ENCODE measurements at regions of chr15 and their contacts with region 1.

Region 1: GRCh38 chr15:68304589-68305337 is 27.2 kb downstream of the FEM1B start:
- DNase-seq: no peak
- ATAC-seq: peak; percentile 10 to 11; a peak in 3 of 6 replicates
- H3K4me3 ChIP-seq: no peak overlapping the region
- H3K27ac ChIP-seq: peak overlapping the region in 1 of 2 experiments; percentile 58; a peak in 2 of 6 replicates
- H3K4me1 ChIP-seq: peaks cover 47% of the 10 kb centered on the region
- CTCF ChIP-seq: no peak
- EP300 ChIP-seq: no peak
- POLR2A ChIP-seq: no peak
- RAD21 ChIP-seq: no peak

Region 2: GRCh38 chr15:67980773-67981685 is 323.7 kb before region 1 on chr15:
- CTCF ChIA-PET with region 1: no interaction called
- POLR2A ChIA-PET with region 1: no interaction called
- DNase-seq: no peak
- ATAC-seq: no peak
- H3K4me3 ChIP-seq: no peak overlapping the region
- H3K27ac ChIP-seq: no peak overlapping the region
- H3K4me1 ChIP-seq: no peaks in the 10 kb centered on the region
- CTCF ChIP-seq: no peak
- EP300 ChIP-seq: no peak
- POLR2A ChIP-seq: no peak
- RAD21 ChIP-seq: no peak

Region 3: GRCh38 chr15:68258692-68259091 is 46.1 kb before region 1 on chr15:
- CTCF ChIA-PET with region 1: interaction called, 189 read pairs
- POLR2A ChIA-PET with region 1: no interaction called
- DNase-seq: no peak
- ATAC-seq: peak in 1 of 2 experiments; percentile 7; a peak in 1 of 6 replicates
- H3K4me3 ChIP-seq: no peak overlapping the region
- H3K27ac ChIP-seq: no peak overlapping the region
- H3K4me1 ChIP-seq: peaks cover 7% of the 10 kb centered on the region; the same call in 2 of the 3 replicates
- CTCF ChIP-seq: no peak
- EP300 ChIP-seq: no peak
- POLR2A ChIP-seq: no peak
- RAD21 ChIP-seq: no peak

Region 4: DNA sequence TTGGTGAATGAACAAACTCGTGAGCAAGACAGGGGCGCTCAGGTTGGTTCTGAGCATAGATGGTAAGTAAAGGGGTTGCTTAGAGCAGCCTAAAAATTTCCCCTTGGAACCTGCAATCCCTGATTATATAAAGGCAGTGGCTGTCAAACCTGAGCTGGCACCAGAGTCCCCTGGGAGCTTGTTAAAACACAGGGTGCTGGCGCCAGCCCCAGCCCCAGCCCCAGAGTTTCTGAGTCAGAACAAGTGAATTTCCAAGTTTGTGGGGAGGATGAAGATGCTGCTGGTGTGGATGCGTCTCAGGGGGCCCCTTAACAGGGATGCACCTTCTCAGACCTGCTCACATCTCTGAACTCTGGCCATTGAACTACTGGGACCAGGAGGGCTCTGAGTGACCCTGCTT is 21.0 kb after region 1 on chr15:
- CTCF ChIA-PET with region 1: interaction called, 97 read pairs
- POLR2A ChIA-PET with region 1: no interaction called
- DNase-seq: no peak
- ATAC-seq: 0 out of 6 replicates have a peak, but pooled peaks of 1 of the 2 experiments have one; percentile 14
- H3K4me3 ChIP-seq: no peak overlapping the region
- H3K27ac ChIP-seq: no peak overlapping the region
- H3K4me1 ChIP-seq: no peaks in the 10 kb centered on the region
- CTCF ChIP-seq: no peak
- EP300 ChIP-seq: no peak
- POLR2A ChIP-seq: no peak
- RAD21 ChIP-seq: no peak

Region 5: GRCh38 chr15:68352401-68353062 is 47.8 kb after region 1 on chr15:
- CTCF ChIA-PET with region 1: interaction called, 58 read pairs
- POLR2A ChIA-PET with region 1: no interaction called
- DNase-seq: peak; percentile 53 to 89
- ATAC-seq: peak; percentile 83 to 86
- H3K4me3 ChIP-seq: no peak overlapping the region
- H3K27ac ChIP-seq: peak overlapping the region; percentile 75 to 84
- H3K4me1 ChIP-seq: peaks cover 42% of the 10 kb centered on the region
- CTCF ChIP-seq: no peak
- EP300 ChIP-seq: peak; percentile 58 to 65; a peak in 2 of 5 replicates
- POLR2A ChIP-seq: no peak
- RAD21 ChIP-seq: peak in 1 of 2 experiments; percentile 43; a peak in 2 of 5 replicates

Region 6: GRCh38 chr15:68431792-68432401 is 127.1 kb after region 1 on chr15 and contains the start of gene ITGA11:
- CTCF ChIA-PET with region 1: interaction called, 11 read pairs
- POLR2A ChIA-PET with region 1: no interaction called
- DNase-seq: peak; percentile 57 to 66
- ATAC-seq: peak; percentile 88 to 92
- H3K4me3 ChIP-seq: peak within 1 kb of the TSS; percentile 58
- H3K27ac ChIP-seq: peak within 1 kb of the TSS; percentile 63 to 86
- H3K4me1 ChIP-seq: peaks cover 25% of the 10 kb centered on the region
- CTCF ChIP-seq: no peak
- EP300 ChIP-seq: no peak
- POLR2A ChIP-seq: peak; percentile 48; the same call in 1 of the 2 replicates
- RAD21 ChIP-seq: 0 out of 5 replicates have a peak, but pooled peaks of 1 of the 2 experiments have one; percentile 40
- polyA plus RNA-seq, gene ITGA11: 8.3 and 13.2 TPM in 2 replicates

Region 7: DNA sequence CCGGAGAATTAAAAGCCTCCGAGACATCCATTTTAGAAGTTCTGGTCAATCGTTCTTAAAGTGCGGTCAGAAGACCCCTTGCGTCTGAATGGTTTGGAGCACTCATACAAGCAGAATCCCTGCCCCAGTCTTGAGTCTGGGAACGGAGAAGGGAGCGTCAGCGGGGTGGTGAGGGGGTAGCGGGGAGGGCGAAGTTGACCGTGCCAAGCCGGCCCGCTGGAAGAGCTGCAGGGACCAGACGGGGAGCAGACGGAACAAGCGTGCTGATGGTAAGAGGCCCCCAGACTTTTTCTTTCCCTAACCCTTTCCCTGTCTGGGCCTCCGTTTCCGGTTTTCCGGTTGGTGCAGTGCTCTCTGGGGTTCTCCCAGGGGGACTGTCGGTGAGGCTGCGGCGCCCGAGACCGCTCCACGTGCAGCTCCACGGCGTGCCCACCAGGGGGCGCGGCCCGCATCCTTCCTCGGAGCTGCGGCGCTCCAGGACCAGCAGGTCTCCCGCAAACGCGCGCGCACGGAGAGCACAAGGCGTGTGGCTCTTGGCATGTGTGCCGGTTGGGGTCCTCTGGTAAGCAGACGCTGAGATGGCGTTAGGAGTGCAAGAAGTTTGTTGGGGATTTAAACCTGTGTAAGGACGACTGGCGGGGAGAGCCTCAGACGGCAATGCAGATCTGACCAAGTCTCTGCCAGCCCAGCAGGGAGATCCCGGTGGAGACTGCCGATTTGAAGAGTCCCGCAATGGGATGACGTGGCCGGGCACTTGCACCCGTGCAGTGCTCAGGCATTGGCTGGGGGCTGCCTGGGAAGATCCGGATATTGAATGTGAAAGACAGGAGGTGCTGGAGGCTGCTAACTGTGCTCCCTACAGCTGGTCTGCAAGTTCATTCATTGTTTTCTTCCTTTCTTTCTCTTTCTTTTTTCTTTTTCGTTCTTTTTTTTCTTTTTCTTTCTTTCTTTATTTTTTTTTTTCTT is 254.9 kb after region 1 on chr15:
- CTCF ChIA-PET with region 1: interaction called, 35 read pairs
- POLR2A ChIA-PET with region 1: no interaction called
- DNase-seq: peak; percentile 84 to 91
- ATAC-seq: peak; percentile 90 to 96
- H3K4me3 ChIP-seq: peak overlapping the region; percentile 43
- H3K27ac ChIP-seq: peak overlapping the region; percentile 41 to 73; a peak in 5 of 6 replicates
- H3K4me1 ChIP-seq: no peaks in the 10 kb centered on the region
- CTCF ChIP-seq: peak; percentile 97
- EP300 ChIP-seq: no peak
- POLR2A ChIP-seq: no peak
- RAD21 ChIP-seq: peak; percentile 85 to 91

Measured in A549 (cell line).